BJ (cell line): ENCODE measurements at regions of chr11 and their contacts with region 1.

Region 1: DNA sequence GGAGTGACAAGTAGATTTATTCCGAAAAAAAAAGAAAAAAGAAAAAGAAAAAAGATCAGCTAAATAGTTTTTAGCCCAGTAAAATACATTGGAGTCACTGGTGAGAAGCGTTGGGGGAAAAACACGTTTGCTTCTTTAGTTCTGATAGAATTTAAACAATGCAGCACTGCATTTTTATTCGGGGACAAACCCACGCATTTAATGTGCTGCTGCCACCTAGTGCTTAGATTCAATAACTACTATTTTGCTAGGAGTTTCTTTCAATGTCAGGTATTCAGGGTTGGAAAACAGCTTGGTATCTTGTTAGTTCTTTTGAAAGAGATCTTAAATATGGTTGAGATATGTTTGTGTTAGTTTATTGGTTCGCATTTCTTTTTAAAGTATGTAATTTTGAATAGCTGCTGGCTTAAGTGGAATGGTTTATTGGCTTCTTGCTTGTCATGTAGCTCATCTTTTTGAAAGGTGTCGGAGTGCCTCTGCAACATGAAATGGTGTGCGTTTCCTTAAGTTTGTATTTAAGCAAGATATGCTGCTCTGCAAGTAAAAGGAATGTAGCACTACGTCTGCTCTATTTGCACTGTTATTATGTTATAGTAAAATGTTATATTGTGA is 41.9 kb downstream of the SVIP start:
- DNase-seq: peak; percentile 1
- H3K4me3 ChIP-seq: no peak overlapping the region
- H3K27me3 ChIP-seq: no peaks in the 10 kb centered on the region
- CTCF ChIP-seq: peak; percentile 63

Region 2: GRCh38 chr11:22337596-22338485 is 449.8 kb before region 1 on chr11 and contains the start of gene SLC17A6:
- CTCF ChIA-PET with region 1: interaction called, 21 read pairs
- POLR2A ChIA-PET with region 1: no interaction called
- DNase-seq: no peak
- H3K4me3 ChIP-seq: no peak within 1 kb of the TSS
- H3K27me3 ChIP-seq: peaks cover 12% of the 10 kb centered on the region
- CTCF ChIP-seq: no peak
- polyA plus RNA-seq, gene SLC17A6: not detected in 2 replicates

Region 3: GRCh38 chr11:22898036-22898435 is 110.4 kb after region 1 on chr11:
- CTCF ChIA-PET with region 1: no interaction called
- POLR2A ChIA-PET with region 1: no interaction called
- DNase-seq: no peak
- H3K4me3 ChIP-seq: no peak overlapping the region
- H3K27me3 ChIP-seq: no peaks in the 10 kb centered on the region
- CTCF ChIP-seq: no peak